ENCODE measurements at regions of chr18 and their contacts with region 1.

Region 1: DNA sequence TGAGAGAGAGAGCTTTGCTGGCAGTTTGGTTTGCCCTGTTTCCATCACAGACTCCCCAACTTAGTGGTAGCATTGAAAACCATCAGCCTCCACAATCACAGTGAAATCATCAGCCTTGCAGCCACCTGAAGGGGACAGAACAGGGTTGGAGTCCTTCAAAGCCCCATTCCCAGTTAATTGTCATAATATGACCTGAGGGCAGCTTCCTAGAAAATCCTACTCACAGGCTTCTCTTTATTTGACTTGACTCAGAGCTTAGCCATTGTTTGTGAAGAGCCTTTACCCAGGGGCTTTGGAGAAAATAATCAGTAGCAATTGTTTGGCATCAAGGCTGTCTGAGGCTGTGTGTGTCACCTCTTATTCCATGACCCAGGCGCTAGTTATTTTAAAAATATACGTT is 308.7 kb downstream of the CBLN2 start:
- DNase-seq: no peak
- ATAC-seq: no peak
- H3K4me3 ChIP-seq: no peak overlapping the region
- H3K27ac ChIP-seq: no peak overlapping the region
- H3K4me1 ChIP-seq: no peaks in the 10 kb centered on the region
- H3K27me3 ChIP-seq: no peaks in the 10 kb centered on the region
- CTCF ChIP-seq: no peak
- POLR2A ChIP-seq: no peak

Region 2: GRCh38 chr18:71815305-71815704 is 420.1 kb before region 1 on chr18:
- in situ Hi-C with region 1: no loop called
- intact Hi-C with region 1: no loop called
- DNase-seq: no peak
- ATAC-seq: no peak
- H3K4me3 ChIP-seq: no peak overlapping the region
- H3K27ac ChIP-seq: no peak overlapping the region
- H3K4me1 ChIP-seq: no peaks in the 10 kb centered on the region
- H3K27me3 ChIP-seq: no peaks in the 10 kb centered on the region
- CTCF ChIP-seq: no peak
- POLR2A ChIP-seq: no peak

Region 3: GRCh38 chr18:72056171-72056570 is 179.3 kb before region 1 on chr18:
- in situ Hi-C with region 1: no loop called
- intact Hi-C with region 1: no loop called
- DNase-seq: no peak
- ATAC-seq: no peak
- H3K4me3 ChIP-seq: no peak overlapping the region
- H3K27ac ChIP-seq: no peak overlapping the region
- H3K4me1 ChIP-seq: no peaks in the 10 kb centered on the region
- H3K27me3 ChIP-seq: no peaks in the 10 kb centered on the region
- CTCF ChIP-seq: no peak
- POLR2A ChIP-seq: no peak

Region 4: DNA sequence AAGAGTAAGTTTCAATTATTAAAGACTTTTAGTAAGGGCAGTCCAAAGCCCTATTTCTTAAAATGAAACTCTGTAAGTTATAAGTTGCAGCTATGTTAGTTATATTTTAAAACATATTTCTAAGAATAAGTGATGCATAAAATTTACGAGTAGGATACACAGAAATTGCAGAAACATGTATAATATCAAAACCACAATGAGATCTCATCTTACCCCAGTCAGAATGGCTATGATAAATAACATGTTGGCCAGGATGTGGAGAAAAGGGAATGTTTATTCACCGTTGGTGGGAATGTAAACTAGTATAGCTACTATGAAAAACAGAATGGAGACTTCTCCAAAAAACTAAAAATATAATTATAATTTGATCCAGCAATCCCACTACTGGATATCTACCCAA is 107.5 kb after region 1 on chr18:
- in situ Hi-C with region 1: loop called in 1 of 4 experiments (anchors 25 kb)
- intact Hi-C with region 1: no loop called
- DNase-seq: no peak
- ATAC-seq: no peak
- H3K4me3 ChIP-seq: no peak overlapping the region
- H3K27ac ChIP-seq: no peak overlapping the region
- H3K4me1 ChIP-seq: no peaks in the 10 kb centered on the region
- H3K27me3 ChIP-seq: no peaks in the 10 kb centered on the region
- CTCF ChIP-seq: no peak
- POLR2A ChIP-seq: no peak

Measured in gastrocnemius medialis (tissue), 4 donors.